ENCODE measurements at regions of chr12 and their contacts with region 1.

Region 1: DNA sequence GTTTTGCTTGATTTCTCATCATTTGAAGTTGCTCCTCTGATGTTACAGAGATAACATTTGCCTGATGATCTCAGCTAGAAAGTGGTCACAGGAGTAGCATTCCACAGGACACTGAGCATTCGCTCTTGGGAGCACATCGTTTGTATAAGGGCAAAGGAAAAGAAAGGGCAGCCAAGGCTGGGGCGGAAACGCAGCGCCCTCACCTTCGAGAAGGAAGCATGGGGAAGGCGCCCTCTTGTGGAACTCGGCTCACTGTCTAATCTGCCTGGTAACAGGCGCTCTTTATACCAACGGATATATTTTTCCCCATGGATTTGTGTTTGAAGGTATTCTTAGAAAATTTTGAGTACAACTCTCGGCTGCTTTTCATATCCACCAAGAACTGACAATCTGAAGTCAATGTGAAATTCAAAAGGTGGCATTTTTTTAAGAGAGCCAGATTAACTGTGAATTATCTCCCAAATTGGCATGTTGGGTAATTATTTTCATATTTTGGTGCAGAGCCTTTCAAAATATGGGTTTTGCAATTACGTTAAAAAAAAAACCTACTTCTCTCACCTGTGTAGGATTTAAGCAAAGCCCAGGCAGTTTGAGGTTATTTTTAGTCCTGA is 172.7 kb downstream of the CAND1 start:
- DNase-seq: peak; percentile 61
- ATAC-seq: peak; percentile 99
- H3K4me3 ChIP-seq: no peak overlapping the region
- H3K27ac ChIP-seq: no peak overlapping the region
- H3K4me1 ChIP-seq: 0 out of 4 replicates have a peak, but pooled peaks cover 0 to 4% of the 10 kb centered on the region in 2 experiments
- H3K27me3 ChIP-seq: no peaks in the 10 kb centered on the region
- CTCF ChIP-seq: peak; percentile 81 to 92 (median 84)
- POLR2A ChIP-seq: no peak
- RAD21 ChIP-seq: peak; percentile 72

Region 2: DNA sequence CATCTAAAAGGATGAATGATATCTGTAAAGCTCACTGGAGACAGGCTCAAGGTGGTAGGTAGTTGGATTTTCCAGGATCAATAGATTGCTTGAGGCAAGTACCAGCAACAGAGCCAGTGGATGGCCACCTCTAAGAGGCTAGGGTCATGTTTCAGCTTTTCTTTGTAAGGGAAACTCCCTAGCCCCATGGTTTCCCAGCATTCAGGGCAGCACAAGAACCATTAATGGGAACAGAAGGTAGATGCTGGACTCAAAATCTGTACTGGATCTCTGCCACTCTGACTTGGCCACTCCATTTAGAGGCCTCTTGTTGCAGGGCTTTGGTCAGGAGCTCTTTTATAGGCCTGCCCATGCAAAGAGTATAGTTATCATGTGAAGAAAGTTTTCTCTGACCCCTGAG is 130.7 kb after region 1 on chr12:
- CTCF ChIA-PET with region 1: no interaction called
- POLR2A ChIA-PET with region 1: no interaction called
- RAD21 ChIA-PET with region 1: no interaction called
- intact Hi-C with region 1: no loop called
- DNase-seq: no peak
- ATAC-seq: no peak
- H3K4me3 ChIP-seq: no peak overlapping the region
- H3K27ac ChIP-seq: no peak overlapping the region
- H3K4me1 ChIP-seq: no peaks in the 10 kb centered on the region
- H3K27me3 ChIP-seq: no peaks in the 10 kb centered on the region
- CTCF ChIP-seq: no peak
- POLR2A ChIP-seq: no peak
- RAD21 ChIP-seq: no peak

Region 3: DNA sequence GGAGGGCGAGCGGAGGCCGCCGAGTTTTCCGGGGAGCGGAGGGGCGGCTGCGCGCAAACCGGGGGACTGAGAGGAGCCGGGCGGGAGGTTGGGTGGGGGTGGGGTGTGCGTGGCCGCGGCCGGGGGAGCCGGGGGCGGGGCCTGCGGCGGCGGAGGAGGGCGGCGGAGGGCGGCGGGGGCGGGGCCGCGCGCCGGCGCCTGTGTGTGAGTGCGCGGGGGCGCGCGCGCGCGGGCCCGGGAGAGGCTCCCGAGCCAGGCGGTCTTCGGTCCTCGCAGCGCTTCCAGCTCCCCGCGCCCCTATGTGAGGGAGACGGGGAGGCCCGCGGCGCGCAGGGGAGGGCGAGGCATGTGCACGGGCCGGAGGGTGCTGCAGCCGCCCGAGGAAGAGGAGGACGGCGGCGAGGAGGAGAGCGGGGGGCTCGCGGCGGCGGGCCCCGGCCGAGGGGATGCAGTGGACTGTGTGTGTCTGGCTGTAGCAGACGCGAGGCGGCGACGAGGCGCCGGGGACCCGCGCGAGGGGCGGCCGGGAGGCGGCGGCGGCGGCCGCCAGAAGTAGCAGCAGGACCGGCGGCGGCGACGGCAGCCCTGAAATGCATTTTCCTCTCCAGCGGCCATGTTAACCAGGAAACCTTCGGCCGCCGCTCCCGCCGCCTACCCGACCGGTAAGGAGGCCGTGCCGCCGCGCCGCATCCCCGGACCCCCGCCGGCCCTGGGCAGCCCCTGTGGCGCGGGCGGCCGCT is 206.8 kb after region 1 on chr12 and contains the start of gene DYRK2:
- CTCF ChIA-PET with region 1: no interaction called
- POLR2A ChIA-PET with region 1: no interaction called
- RAD21 ChIA-PET with region 1: no interaction called
- intact Hi-C with region 1: loop called (anchors 5 kb)
- DNase-seq: peak; percentile 27
- ATAC-seq: peak; percentile 65
- H3K4me3 ChIP-seq: peak within 1 kb of the TSS; percentile 70 to 80
- H3K27ac ChIP-seq: peak within 1 kb of the TSS; percentile 79
- H3K4me1 ChIP-seq: peaks cover 14 to 30% of the 10 kb centered on the region in 2 experiments
- H3K27me3 ChIP-seq: no peaks in the 10 kb centered on the region
- CTCF ChIP-seq: no peak
- POLR2A ChIP-seq: peak; percentile 71
- RAD21 ChIP-seq: 0 out of 2 replicates have a peak, but pooled peaks have one; percentile 14
- total RNA-seq, gene DYRK2: 28.7 TPM

Region 4: DNA sequence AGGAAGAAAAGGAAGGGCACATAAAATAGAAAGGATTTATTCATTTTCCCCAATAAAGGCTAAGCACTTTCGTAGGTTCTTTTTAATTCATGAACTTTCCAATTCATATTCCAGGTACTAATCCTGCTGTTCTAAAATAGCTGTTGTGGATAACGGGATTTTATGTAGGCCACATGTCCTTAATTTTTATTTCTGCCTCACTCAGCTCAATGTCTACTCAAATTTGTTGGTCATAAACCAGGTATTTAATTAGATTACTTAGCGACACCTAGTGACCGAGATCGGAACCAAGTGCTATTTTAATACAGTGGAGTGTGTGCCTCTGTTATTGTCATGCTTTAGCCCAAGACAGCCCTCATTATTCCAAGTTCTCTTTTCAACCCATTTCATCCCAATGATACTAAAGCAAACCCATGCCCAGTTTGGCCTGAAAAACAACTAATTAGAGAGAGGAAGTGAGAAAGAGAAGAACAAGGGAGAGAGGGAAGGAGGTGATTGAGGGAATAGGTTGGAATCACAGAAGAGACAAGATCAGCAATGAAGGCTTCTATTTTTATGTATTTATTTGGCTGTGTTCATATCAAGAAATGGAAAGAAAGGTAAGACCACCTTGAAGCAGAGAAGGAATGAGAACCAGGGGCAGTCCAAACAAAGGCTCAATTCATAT is 501.5 kb after region 1 on chr12:
- CTCF ChIA-PET with region 1: no interaction called
- POLR2A ChIA-PET with region 1: no interaction called
- RAD21 ChIA-PET with region 1: no interaction called
- intact Hi-C with region 1: loop called (anchors 1 kb)
- DNase-seq: peak; percentile 39
- ATAC-seq: peak; percentile 92
- H3K4me3 ChIP-seq: no peak overlapping the region
- H3K27ac ChIP-seq: no peak overlapping the region
- H3K4me1 ChIP-seq: no peaks in the 10 kb centered on the region
- H3K27me3 ChIP-seq: no peaks in the 10 kb centered on the region
- CTCF ChIP-seq: peak; percentile 47 to 81 (median 70)
- POLR2A ChIP-seq: no peak
- RAD21 ChIP-seq: peak; percentile 82

Region 5: GRCh38 chr12:68137335-68137830 is 695.5 kb after region 1 on chr12:
- CTCF ChIA-PET with region 1: no interaction called
- POLR2A ChIA-PET with region 1: no interaction called
- RAD21 ChIA-PET with region 1: no interaction called
- intact Hi-C with region 1: no loop called
- DNase-seq: no peak
- ATAC-seq: no peak
- H3K4me3 ChIP-seq: no peak overlapping the region
- H3K27ac ChIP-seq: no peak overlapping the region
- H3K4me1 ChIP-seq: no peaks in the 10 kb centered on the region
- H3K27me3 ChIP-seq: no peaks in the 10 kb centered on the region
- CTCF ChIP-seq: no peak
- POLR2A ChIP-seq: no peak
- RAD21 ChIP-seq: no peak

Measured in HCT116 (cell line).